PC-9 (cell line): ENCODE measurements at regions of chr20 and their contacts with region 1.

Region 1: GRCh38 chr20:55095745-55096400 is 620.5 kb downstream of the DOK5 start:
- DNase-seq: no peak
- H3K4me3 ChIP-seq: no peak overlapping the region
- H3K27ac ChIP-seq: no peak overlapping the region
- H3K4me1 ChIP-seq: no peaks in the 10 kb centered on the region
- H3K27me3 ChIP-seq: peaks cover 8% of the 10 kb centered on the region; the same call in 1 of the 2 replicates
- CTCF ChIP-seq: no peak

Region 2: GRCh38 chr20:55191939-55192338 is 96.1 kb after region 1 on chr20:
- CTCF ChIA-PET with region 1: no interaction called
- POLR2A ChIA-PET with region 1: no interaction called
- intact Hi-C with region 1: loop called (anchors 10 kb)
- DNase-seq: no peak
- H3K4me3 ChIP-seq: no peak overlapping the region
- H3K27ac ChIP-seq: no peak overlapping the region
- H3K4me1 ChIP-seq: no peaks in the 10 kb centered on the region
- H3K27me3 ChIP-seq: no peaks in the 10 kb centered on the region
- CTCF ChIP-seq: no peak